ENCODE measurements at regions of chr10 and their contacts with region 1.

Region 1: DNA sequence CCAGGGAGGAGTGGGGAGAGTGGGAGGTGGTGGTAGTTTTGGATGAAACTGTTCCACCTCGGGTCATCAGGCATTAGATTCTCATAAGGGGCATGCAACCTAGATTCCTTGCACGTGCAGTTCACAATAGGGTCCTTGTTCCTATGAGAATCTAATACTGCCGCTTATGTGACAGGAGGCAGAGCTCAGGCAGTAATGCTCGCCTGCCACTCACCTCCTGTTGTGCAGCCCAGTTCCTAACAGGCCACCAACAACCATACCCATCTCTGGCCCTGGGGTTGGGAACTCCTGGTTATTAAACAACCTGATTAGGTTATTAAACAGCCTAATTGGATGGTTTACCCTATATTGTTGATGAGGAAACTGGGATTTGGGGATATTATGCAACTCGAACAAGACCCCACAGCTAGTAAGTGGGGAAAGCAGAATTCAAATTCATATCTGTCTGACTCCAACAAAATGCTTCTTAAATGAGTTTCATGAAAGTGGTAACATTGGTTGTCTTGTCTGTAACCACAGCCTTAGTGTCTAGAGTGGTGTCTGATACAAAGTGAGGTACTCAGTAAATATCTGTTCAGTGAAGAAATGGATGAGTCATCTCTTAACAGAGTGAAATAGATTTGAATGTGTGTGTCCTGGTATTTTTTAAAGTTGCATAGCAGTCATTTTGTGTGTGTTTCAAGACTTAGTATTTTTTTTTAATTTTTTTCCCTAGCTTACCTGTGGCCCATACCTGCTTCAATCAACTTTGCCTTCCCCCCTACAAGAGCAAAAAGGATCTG is 101.6 kb downstream of the HECTD2 start:
- DNase-seq: no peak
- ATAC-seq: no peak
- H3K4me3 ChIP-seq: no peak overlapping the region
- H3K27ac ChIP-seq: peak overlapping the region in 1 of 10 donors; percentile 33
- H3K4me1 ChIP-seq: no peaks in the 10 kb centered on the region
- H3K27me3 ChIP-seq: no peaks in the 10 kb centered on the region
- CTCF ChIP-seq: no peak

Region 2: GRCh38 chr10:91891285-91892001 is 379.7 kb after region 1 on chr10:
- intact Hi-C with region 1: loop called in 1 of 10 experiments (anchors 5 kb)
- DNase-seq: no peak
- ATAC-seq: peak in 1 of 8 donors; percentile 29
- H3K4me3 ChIP-seq: no peak overlapping the region
- H3K27ac ChIP-seq: no peak overlapping the region
- H3K4me1 ChIP-seq: peaks cover 0 to 15% (median 13%) of the 10 kb centered on the region in 9 donors
- H3K27me3 ChIP-seq: peaks cover 0 to 25% (median 4%) of the 10 kb centered on the region in 7 donors
- CTCF ChIP-seq: no peak